Activated naive CD4-positive, alpha-beta T cell treated with anti-CD3 and anti-CD28 coated beads for 36 hours (primary cell): ENCODE measurements at regions of chr5 and their contacts with region 1.

Region 1: GRCh38 chr5:82165740-82166530 is 112.2 kb downstream of the RPS23 start:
- DNase-seq: peak; percentile 56
- H3K4me3 Mint-ChIP-seq: no peak overlapping the region
- H3K27ac Mint-ChIP-seq: no peak overlapping the region
- H3K4me1 Mint-ChIP-seq: peaks cover 15% of the 10 kb centered on the region
- H3K27me3 Mint-ChIP-seq: no peaks in the 10 kb centered on the region

Region 2: DNA sequence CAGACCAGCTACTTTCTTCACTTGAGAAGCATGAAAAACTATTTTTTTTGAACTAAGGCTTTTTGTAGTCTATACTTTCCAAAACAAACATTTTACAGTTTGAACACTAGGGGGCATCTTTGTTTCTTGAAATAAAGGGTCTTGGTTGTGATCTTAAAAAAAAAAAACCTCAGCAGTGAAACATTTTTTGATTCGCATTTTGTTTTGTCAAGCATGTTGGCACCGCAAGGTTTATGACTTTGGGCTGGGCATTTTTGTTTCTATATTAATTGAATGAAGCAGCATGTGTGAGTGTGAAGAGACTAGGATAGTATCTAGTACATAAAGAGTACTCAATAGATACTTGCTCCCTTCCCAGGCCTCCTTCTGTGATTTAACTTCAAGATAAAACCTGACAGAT is 740.4 kb before region 1 on chr5:
- CTCF ChIA-PET with region 1: interaction called, 18 read pairs
- intact Hi-C with region 1: loop called (anchors 1 kb)
- DNase-seq: peak; percentile 7
- H3K4me3 Mint-ChIP-seq: no peak overlapping the region
- H3K27ac Mint-ChIP-seq: peak overlapping the region; percentile 8
- H3K4me1 Mint-ChIP-seq: peaks cover 16% of the 10 kb centered on the region
- H3K27me3 Mint-ChIP-seq: no peaks in the 10 kb centered on the region

Region 3: GRCh38 chr5:81506900-81507588 is 658.9 kb before region 1 on chr5:
- CTCF ChIA-PET with region 1: interaction called, 17 read pairs
- intact Hi-C with region 1: loop called (anchors 1 kb)
- DNase-seq: peak; percentile 62
- H3K4me3 Mint-ChIP-seq: no peak overlapping the region
- H3K27ac Mint-ChIP-seq: no peak overlapping the region
- H3K4me1 Mint-ChIP-seq: no peaks in the 10 kb centered on the region
- H3K27me3 Mint-ChIP-seq: no peaks in the 10 kb centered on the region

Region 4: GRCh38 chr5:81513982-81514381 is 652.0 kb before region 1 on chr5:
- CTCF ChIA-PET with region 1: interaction called, 5 read pairs
- intact Hi-C with region 1: loop called (anchors 2 kb)
- DNase-seq: no peak
- H3K4me3 Mint-ChIP-seq: no peak overlapping the region
- H3K27ac Mint-ChIP-seq: no peak overlapping the region
- H3K4me1 Mint-ChIP-seq: no peaks in the 10 kb centered on the region
- H3K27me3 Mint-ChIP-seq: no peaks in the 10 kb centered on the region

Region 5: DNA sequence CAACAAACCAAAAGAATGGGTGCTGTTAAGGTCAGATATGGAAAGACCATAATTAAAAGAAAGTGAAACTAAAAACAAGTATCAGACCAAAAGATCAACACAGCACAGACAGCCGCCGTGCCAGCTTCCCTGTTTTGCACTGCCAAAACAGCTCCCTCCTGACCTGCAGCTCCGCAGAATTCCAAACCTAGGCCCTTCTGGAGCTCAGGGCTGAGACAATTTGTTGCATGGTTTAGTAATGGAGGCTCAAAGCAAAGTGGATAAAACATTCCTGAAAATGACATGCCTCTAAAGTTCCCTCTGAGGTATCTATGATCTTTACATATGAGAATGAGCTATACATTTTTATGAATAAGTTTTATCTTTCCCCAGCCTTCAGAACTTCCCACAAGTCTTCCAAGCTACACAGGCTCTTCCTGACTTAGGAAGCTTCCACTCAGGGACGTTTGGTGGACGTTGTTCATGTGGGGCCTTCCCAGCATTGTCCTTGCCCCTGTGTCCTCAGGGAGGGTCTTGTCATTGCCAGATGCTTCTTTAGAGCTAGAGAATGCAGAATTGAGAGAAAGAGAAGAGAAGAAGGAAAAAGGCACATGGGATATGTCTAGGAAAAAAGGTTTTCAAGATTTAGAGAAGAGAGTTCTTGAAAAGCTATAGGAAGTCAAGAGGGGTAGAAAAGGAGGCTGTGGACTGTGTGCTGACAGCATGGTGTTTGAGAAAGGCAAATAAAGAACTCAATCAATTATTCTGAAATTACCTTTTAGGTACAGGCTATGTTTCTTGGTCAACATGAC is 386.6 kb before region 1 on chr5:
- CTCF ChIA-PET with region 1: no interaction called
- intact Hi-C with region 1: loop called (anchors 2 kb)
- DNase-seq: peak; percentile 51
- H3K4me3 Mint-ChIP-seq: peak overlapping the region; percentile 73
- H3K27ac Mint-ChIP-seq: peak overlapping the region; percentile 83
- H3K4me1 Mint-ChIP-seq: peaks cover 16% of the 10 kb centered on the region
- H3K27me3 Mint-ChIP-seq: no peaks in the 10 kb centered on the region

Region 6: DNA sequence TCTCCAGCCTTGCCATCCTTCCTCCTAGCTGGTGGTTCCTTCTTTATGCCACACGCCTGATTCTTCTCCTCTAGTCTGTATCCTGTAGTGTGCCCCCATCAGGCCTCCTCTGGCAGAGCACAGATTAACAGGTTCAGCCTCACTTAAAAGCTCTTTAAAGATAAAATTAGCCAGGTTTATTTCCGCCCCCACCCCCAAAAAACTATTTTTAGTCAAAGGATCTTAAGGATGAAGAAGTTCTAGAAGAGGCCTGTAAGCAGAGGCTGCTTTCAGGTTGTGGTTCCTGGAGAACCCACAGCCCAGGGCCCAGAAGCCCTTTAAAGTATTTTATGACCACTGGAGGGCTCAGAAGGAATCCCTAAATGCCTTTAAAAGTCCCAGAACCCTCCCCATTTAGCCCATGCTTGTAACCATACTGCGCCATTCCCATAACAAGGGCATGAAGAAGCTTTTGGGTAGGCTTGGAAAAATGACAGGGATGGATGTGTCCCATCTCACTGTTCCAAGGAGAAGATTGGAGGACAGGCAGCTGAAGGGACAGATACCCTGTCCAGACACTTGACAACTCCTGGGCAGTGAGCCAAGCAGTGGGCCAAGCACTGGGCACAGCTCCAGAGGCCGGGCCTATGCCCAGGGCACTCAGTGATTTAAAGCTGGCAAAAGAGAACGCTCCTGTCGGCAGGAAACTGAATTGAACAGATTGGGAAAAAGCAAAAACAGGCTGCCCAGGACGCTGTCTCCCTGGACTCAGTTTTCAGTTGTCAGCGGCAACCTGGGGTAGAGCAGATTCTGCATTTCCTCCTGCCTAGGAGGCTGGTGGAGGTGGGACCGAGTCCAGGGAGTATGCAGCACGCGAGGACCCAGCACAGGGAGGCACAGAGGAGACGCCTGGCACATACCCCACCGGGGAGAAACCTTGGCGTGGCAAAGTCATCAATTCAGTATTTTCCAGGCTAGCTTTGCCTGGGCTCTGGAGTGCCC is 308.7 kb before region 1 on chr5:
- CTCF ChIA-PET with region 1: interaction called, 7 read pairs
- intact Hi-C with region 1: loop called (anchors 2 kb)
- DNase-seq: peak; percentile 37
- H3K4me3 Mint-ChIP-seq: no peak overlapping the region
- H3K27ac Mint-ChIP-seq: no peak overlapping the region
- H3K4me1 Mint-ChIP-seq: peaks cover 25% of the 10 kb centered on the region
- H3K27me3 Mint-ChIP-seq: no peaks in the 10 kb centered on the region

Region 7: GRCh38 chr5:82107267-82107666 is 58.7 kb before region 1 on chr5:
- CTCF ChIA-PET with region 1: no interaction called
- intact Hi-C with region 1: loop called (anchors 2 kb)
- DNase-seq: no peak
- H3K4me3 Mint-ChIP-seq: no peak overlapping the region
- H3K27ac Mint-ChIP-seq: no peak overlapping the region
- H3K4me1 Mint-ChIP-seq: peaks cover 15% of the 10 kb centered on the region
- H3K27me3 Mint-ChIP-seq: no peaks in the 10 kb centered on the region